CD8-positive, alpha-beta memory T cell (primary cell): ENCODE measurements at regions of chr3 and their contacts with region 1.

Region 1: GRCh38 chr3:120417272-120417911 is 33.4 kb downstream of the FSTL1 start:
- DNase-seq: peak; percentile 63 to 86 (median 73)
- H3K4me3 ChIP-seq: peak overlapping the region; percentile 30
- H3K4me3 Mint-ChIP-seq: peak overlapping the region; percentile 81 to 93 (median 84)
- H3K27ac ChIP-seq: no peak overlapping the region
- H3K27ac Mint-ChIP-seq: peak overlapping the region in 6 of 8 donors; percentile 9 to 91 (median 38)
- H3K4me1 ChIP-seq: peaks cover 5% of the 10 kb centered on the region
- H3K4me1 Mint-ChIP-seq: peaks cover 10 to 21% (median 14%) of the 10 kb centered on the region in 3 donors
- H3K27me3 ChIP-seq: no peaks in the 10 kb centered on the region
- H3K27me3 Mint-ChIP-seq: peaks cover 8 to 10% of the 10 kb centered on the region in 2 donors

Region 2: GRCh38 chr3:120239644-120240043 is 177.7 kb before region 1 on chr3:
- CTCF ChIA-PET with region 1: interaction called, 90 read pairs
- POLR2A ChIA-PET with region 1: no interaction called
- DNase-seq: no peak
- H3K4me3 ChIP-seq: no peak overlapping the region
- H3K4me3 Mint-ChIP-seq: no peak overlapping the region
- H3K27ac ChIP-seq: no peak overlapping the region
- H3K27ac Mint-ChIP-seq: no peak overlapping the region
- H3K4me1 ChIP-seq: no peaks in the 10 kb centered on the region
- H3K4me1 Mint-ChIP-seq: no peaks in the 10 kb centered on the region
- H3K27me3 ChIP-seq: no peaks in the 10 kb centered on the region
- H3K27me3 Mint-ChIP-seq: peaks cover 27 to 60% of the 10 kb centered on the region in 2 donors

Region 3: DNA sequence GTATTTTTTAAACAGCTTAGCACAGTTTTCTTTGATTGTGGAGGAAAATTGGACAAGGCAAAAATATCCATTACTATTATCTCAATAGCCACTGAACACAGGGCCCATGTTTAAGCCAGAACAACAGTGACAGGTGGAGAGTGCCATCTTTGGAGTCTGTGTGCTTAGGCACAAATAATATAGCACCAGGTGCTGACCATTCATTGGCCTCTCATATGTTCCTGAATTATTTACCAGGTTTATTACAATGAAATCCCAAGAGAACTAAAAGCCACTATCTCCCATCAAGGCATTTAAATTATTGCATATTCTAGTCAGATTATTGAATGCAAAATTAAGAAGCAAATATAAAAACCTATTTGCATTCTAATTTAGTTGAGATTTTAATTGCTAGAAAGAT is 172.0 kb before region 1 on chr3:
- CTCF ChIA-PET with region 1: interaction called, 90 read pairs
- POLR2A ChIA-PET with region 1: no interaction called
- DNase-seq: no peak
- H3K4me3 ChIP-seq: no peak overlapping the region
- H3K4me3 Mint-ChIP-seq: no peak overlapping the region
- H3K27ac ChIP-seq: no peak overlapping the region
- H3K27ac Mint-ChIP-seq: no peak overlapping the region
- H3K4me1 ChIP-seq: no peaks in the 10 kb centered on the region
- H3K4me1 Mint-ChIP-seq: no peaks in the 10 kb centered on the region
- H3K27me3 ChIP-seq: no peaks in the 10 kb centered on the region
- H3K27me3 Mint-ChIP-seq: peaks cover 23 to 39% of the 10 kb centered on the region in 2 donors

Region 4: DNA sequence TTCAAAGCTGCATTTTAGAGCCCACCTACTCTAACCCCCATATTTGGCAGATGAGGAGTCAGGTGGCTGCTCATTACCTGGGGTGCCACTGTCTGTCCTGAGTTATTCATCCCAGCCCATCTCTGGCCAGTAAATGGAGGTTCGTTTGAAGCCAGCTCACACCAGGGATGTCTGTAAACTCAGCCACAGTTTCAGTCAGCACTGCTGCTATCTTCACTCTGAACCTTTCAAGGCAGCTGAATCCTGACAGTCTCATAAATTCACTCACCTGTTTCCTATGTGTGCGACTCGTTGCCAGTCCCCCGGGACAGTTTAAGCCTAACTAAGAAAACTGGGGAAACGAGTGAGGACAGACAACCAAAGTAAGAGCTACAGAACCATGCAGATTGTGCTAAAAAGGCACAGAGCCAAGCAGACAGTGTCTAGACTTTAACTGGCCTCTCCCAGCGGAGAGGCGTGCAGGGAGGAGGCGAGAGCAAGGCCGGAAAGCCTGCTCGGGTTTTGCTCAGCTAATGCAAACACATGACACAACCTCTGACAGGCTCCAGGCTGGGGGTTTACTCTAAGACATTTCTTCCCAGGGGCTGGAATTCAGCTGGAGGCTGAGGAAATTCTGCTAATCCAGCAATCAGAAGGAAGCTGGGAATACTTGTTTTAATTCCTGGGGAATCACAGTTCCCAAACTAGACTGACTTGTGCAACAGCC is 21.4 kb after region 1 on chr3:
- CTCF ChIA-PET with region 1: no interaction called
- POLR2A ChIA-PET with region 1: no interaction called
- DNase-seq: no peak
- H3K4me3 ChIP-seq: no peak overlapping the region
- H3K4me3 Mint-ChIP-seq: no peak overlapping the region
- H3K27ac ChIP-seq: no peak overlapping the region
- H3K27ac Mint-ChIP-seq: peak overlapping the region in 1 of 8 donors; percentile 20
- H3K4me1 ChIP-seq: no peaks in the 10 kb centered on the region
- H3K4me1 Mint-ChIP-seq: no peaks in the 10 kb centered on the region
- H3K27me3 ChIP-seq: no peaks in the 10 kb centered on the region
- H3K27me3 Mint-ChIP-seq: peaks cover 4 to 26% of the 10 kb centered on the region in 2 donors

Region 5: DNA sequence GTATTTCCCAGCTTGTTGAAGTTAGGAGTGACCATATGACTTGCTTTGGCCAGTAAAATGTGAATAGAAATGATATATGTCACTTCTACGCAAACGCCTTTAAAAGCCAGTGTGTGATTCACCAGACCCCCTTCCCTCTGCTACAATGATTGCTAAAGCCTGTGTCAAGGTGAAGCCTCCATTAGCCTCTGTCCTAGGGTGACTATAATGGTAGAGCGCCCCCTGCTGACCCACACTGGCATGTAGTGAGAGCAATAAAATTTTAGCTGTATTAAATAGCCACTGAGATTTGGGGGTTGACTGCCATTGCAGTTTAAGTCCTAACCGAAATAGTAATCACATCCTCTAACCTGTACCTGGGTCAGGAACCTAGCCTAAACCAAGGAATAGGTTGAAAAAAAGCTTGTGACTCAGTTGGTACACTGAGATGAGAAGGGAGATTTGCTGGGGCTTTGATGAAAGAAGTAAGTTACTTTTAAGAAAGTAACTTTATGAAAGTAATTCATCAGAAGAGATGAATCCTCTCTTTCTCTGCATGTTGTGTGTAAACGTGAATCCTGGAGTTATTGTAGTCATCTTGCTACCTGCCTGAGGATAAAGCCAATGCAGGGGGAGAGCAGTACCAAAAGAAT is 377.7 kb after region 1 on chr3:
- CTCF ChIA-PET with region 1: interaction called, 10 read pairs
- POLR2A ChIA-PET with region 1: no interaction called
- DNase-seq: peak; percentile 60 to 85 (median 72)
- H3K4me3 ChIP-seq: no peak overlapping the region
- H3K4me3 Mint-ChIP-seq: no peak overlapping the region
- H3K27ac ChIP-seq: no peak overlapping the region
- H3K27ac Mint-ChIP-seq: no peak overlapping the region
- H3K4me1 ChIP-seq: no peaks in the 10 kb centered on the region
- H3K4me1 Mint-ChIP-seq: no peaks in the 10 kb centered on the region
- H3K27me3 ChIP-seq: no peaks in the 10 kb centered on the region
- H3K27me3 Mint-ChIP-seq: no peaks in the 10 kb centered on the region